Activated CD4-positive, alpha-beta T cell treated with anti-CD3 and anti-CD28 coated beads, Interleukin-2, amount 10 ng/mL, durations not matched to agents 24 days and 14 days (primary cell): ENCODE measurements at regions of chr6 and their contacts with region 1.

Region 1: GRCh38 chr6:55886185-55886836 is 10.9 kb upstream of the BMP5 start:
- DNase-seq: no peak
- H3K4me3 Mint-ChIP-seq: no peak overlapping the region
- H3K27ac Mint-ChIP-seq: no peak overlapping the region
- H3K4me1 Mint-ChIP-seq: no peaks in the 10 kb centered on the region
- H3K27me3 Mint-ChIP-seq: peaks cover 1% of the 10 kb centered on the region

Region 2: GRCh38 chr6:55276745-55277530 is 609.4 kb before region 1 on chr6:
- intact Hi-C with region 1: loop called (anchors 5 kb)
- DNase-seq: peak; percentile 58
- H3K4me3 Mint-ChIP-seq: no peak overlapping the region
- H3K27ac Mint-ChIP-seq: no peak overlapping the region
- H3K4me1 Mint-ChIP-seq: no peaks in the 10 kb centered on the region
- H3K27me3 Mint-ChIP-seq: no peaks in the 10 kb centered on the region

Region 3: GRCh38 chr6:55445648-55446204 is 440.6 kb before region 1 on chr6:
- intact Hi-C with region 1: loop called (anchors 5 kb)
- DNase-seq: no peak
- H3K4me3 Mint-ChIP-seq: no peak overlapping the region
- H3K27ac Mint-ChIP-seq: no peak overlapping the region
- H3K4me1 Mint-ChIP-seq: no peaks in the 10 kb centered on the region
- H3K27me3 Mint-ChIP-seq: no peaks in the 10 kb centered on the region